ENCODE measurements at regions of chr1 and their contacts with region 1.

Region 1: DNA sequence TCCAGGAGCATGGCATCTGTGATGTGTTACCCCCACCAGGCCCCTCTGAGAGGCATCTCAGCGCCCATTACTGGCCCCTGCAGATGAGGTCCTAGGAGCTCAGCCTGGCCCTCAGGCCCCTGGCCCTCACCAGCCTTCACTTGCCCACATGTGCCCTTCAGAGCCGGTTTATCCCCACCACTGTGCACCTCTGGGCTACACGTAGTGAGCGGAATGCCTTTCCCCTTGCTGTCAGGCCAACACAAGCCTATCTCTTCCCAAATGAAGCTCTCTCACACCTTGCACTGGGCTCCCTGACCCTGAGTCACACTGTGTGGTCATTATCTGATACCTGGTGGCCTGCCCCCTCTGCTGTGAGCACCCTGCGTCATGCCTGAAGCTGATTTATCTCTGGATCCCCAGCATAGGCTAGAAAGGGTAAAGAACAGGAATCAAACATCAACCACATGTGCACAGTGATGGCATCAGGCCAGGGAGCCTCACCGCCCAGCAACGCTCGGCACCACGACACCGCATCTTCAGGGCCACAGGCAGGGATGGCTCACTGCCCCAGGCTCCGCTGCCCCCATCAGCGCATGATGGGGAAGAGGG is 49.1 kb downstream of the GLIS1 start:
- DNase-seq: no peak

Region 2: DNA sequence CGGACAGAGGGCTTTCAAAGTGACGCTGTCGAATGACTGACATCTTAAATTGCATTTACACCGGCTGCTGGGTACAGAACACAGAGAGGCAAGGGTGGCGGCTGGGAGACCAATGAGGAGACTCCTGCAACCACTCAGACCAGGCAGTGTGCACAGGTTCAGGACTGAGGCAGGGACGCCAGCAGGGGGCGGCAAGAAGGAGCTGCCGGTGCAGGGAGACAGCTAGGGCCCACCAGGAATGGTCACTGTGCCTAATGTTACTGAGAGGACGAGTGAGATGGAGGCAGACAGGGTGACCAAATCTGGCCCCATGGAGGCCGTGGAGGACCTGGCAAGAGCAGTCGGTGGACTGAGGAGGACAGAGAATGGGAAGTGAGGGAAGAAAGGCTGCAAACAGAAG is 25.6 kb after region 1 on chr1:
- intact Hi-C with region 1: loop called in 1 of 2 experiments (anchors 1 kb)
- DNase-seq: no peak

Measured in posterior vena cava (tissue), 2 donors.